Activated CD8-positive, alpha-beta T cell treated with anti-CD3 and anti-CD28 coated beads for 36 hours (primary cell): ENCODE measurements at regions of chr20 and their contacts with region 1.

Region 1: GRCh38 chr20:38221119-38221589 is 39.4 kb downstream of the KIAA1755 start:
- DNase-seq: peak; percentile 79
- ATAC-seq: peak; percentile 78
- H3K4me3 Mint-ChIP-seq: no peak overlapping the region
- H3K27ac Mint-ChIP-seq: no peak overlapping the region
- H3K4me1 Mint-ChIP-seq: no peaks in the 10 kb centered on the region
- H3K27me3 Mint-ChIP-seq: no peaks in the 10 kb centered on the region
- CTCF ChIP-seq: peak; percentile 95

Region 2: DNA sequence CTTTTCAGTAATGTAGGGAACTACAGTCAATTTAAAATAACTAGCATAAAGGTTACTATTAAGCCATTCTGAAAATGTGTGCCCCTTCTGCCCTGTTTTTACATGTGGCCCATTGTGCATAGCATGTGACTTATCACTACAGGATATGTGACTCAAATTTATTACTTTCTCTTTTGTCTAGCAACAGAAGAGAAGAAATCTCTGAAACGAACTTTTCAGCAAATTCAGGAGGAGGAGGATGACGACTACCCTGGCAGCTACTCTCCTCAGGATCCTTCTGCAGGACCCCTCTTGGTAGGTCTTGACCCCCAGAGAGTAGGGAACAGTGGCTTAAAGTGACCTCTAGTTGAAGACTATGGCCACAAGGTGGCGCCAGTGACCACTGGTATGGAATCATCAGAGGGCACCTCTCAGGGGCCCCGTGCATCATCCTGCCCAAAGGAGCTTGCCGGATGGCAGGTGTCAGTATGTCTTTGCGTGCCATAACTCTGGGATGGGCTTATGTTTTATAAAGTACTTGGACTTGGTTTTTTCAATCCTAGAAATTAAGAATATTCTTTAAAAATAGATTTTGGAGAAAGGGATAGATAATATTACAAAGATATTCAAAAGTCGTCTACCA is 163.7 kb before region 1 on chr20:
- CTCF ChIA-PET with region 1: interaction called, 68 read pairs
- POLR2A ChIA-PET with region 1: no interaction called
- intact Hi-C with region 1: loop called (anchors 5 kb)
- DNase-seq: peak; percentile 91
- ATAC-seq: peak; percentile 91
- H3K4me3 Mint-ChIP-seq: no peak overlapping the region
- H3K27ac Mint-ChIP-seq: peak overlapping the region; percentile 84
- H3K4me1 Mint-ChIP-seq: peaks cover 29% of the 10 kb centered on the region
- H3K27me3 Mint-ChIP-seq: no peaks in the 10 kb centered on the region
- CTCF ChIP-seq: peak; percentile 95

Region 3: DNA sequence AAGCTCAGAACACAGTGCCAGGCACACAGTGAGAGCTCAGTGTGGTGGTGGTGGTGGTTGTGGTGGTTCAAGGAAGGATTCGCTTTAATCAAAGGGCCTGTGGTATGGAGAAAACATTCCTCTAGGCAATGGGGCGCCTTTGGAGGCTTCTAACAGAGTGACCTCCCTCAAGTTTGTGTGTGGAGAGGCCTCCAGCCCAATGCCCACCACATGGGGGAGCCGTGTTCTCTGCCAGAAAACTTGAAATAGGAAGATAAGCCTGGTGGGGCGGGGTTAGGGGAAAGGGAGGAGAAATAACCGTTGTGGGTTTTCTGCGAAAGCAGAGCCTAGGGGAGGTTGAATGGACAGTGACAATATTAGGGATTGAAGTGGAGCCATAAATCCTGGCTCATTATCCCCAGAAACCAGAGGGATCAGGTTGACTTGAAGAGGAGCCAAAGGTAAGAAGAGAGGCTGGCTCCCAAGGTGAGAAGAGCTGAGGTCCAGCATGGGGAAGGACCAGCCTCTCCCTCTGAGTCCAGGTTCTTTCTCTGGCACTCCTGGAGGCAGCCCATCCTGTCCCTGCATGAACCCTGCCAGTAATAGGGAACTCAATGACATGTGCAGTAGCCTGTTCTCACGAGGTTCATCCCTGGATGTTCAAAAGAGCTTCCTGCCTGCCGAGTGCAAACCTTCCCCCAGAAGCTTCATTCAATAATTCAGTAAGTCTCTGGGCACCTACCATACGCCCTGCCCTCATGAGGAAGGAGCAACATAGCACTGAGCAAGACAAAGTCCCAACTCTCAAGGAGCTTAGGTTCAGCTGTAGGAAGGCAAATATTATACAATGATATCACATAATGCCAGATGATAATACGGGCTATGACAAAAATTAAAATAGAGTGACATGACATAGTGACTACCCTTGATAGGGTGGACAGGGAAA is 107.5 kb before region 1 on chr20:
- CTCF ChIA-PET with region 1: interaction called, 30 read pairs
- POLR2A ChIA-PET with region 1: no interaction called
- intact Hi-C with region 1: no loop called
- DNase-seq: peak; percentile 56
- ATAC-seq: no peak
- H3K4me3 Mint-ChIP-seq: no peak overlapping the region
- H3K27ac Mint-ChIP-seq: no peak overlapping the region
- H3K4me1 Mint-ChIP-seq: no peaks in the 10 kb centered on the region
- H3K27me3 Mint-ChIP-seq: no peaks in the 10 kb centered on the region
- CTCF ChIP-seq: no peak

Region 4: GRCh38 chr20:38201356-38201755 is 19.8 kb before region 1 on chr20:
- CTCF ChIA-PET with region 1: interaction called, 21 read pairs
- POLR2A ChIA-PET with region 1: interaction called, 3 read pairs
- intact Hi-C with region 1: no loop called
- DNase-seq: no peak
- ATAC-seq: no peak
- H3K4me3 Mint-ChIP-seq: no peak overlapping the region
- H3K27ac Mint-ChIP-seq: no peak overlapping the region
- H3K4me1 Mint-ChIP-seq: no peaks in the 10 kb centered on the region
- H3K27me3 Mint-ChIP-seq: no peaks in the 10 kb centered on the region
- CTCF ChIP-seq: no peak

Region 5: DNA sequence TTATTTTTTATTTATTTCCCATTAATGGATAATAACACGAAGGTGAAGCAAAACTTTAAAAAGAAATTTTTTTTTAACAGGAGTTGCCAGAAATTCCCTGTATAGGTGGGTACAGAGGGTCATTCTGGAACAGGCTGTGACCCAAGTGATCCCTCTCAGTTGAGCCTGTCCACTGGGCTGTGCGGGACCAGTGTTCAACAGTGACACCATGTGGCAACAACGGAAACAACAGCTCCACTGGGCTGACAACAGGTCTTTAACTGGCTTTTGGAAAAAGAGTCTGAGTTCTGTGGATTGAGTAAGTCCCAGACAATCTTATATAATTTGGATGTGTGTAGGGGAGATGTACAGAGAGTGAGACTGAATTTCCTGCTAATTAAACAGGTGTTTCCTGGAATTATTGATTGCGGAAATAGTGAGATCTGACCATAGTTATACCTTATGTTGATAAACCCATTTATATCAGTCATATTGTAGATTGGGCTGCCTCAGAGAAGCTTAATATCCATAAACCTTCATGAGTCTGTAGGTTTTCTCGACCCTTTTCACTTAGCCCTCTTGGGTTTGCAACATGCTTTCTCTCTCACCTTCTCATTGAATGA is 21.8 kb after region 1 on chr20:
- CTCF ChIA-PET with region 1: interaction called, 31 read pairs
- POLR2A ChIA-PET with region 1: no interaction called
- intact Hi-C with region 1: no loop called
- DNase-seq: peak; percentile 55
- ATAC-seq: peak; percentile 66
- H3K4me3 Mint-ChIP-seq: no peak overlapping the region
- H3K27ac Mint-ChIP-seq: no peak overlapping the region
- H3K4me1 Mint-ChIP-seq: no peaks in the 10 kb centered on the region
- H3K27me3 Mint-ChIP-seq: peaks cover 7% of the 10 kb centered on the region
- CTCF ChIP-seq: peak; percentile 86